Naive thymus-derived CD4-positive, alpha-beta T cell (primary cell): ENCODE measurements at regions of chr18 and their contacts with region 1.

Region 1: GRCh38 chr18:63074981-63075404 is 244.6 kb downstream of the BCL2 start:
- DNase-seq: peak; percentile 19 to 68 (median 42)
- ATAC-seq: peak; percentile 80
- H3K4me3 ChIP-seq: peak overlapping the region; percentile 66
- H3K4me3 Mint-ChIP-seq: peak overlapping the region; percentile 70 to 95 (median 86)
- H3K27ac ChIP-seq: no peak overlapping the region
- H3K27ac Mint-ChIP-seq: peak overlapping the region in 8 of 9 donors; percentile 0 to 85 (median 65)
- H3K4me1 ChIP-seq: no peaks in the 10 kb centered on the region
- H3K4me1 Mint-ChIP-seq: peaks cover 0 to 13% (median 12%) of the 10 kb centered on the region in 7 donors
- H3K27me3 ChIP-seq: no peaks in the 10 kb centered on the region
- H3K27me3 Mint-ChIP-seq: peaks cover 0 to 23% (median 10%) of the 10 kb centered on the region in 5 donors

Region 2: DNA sequence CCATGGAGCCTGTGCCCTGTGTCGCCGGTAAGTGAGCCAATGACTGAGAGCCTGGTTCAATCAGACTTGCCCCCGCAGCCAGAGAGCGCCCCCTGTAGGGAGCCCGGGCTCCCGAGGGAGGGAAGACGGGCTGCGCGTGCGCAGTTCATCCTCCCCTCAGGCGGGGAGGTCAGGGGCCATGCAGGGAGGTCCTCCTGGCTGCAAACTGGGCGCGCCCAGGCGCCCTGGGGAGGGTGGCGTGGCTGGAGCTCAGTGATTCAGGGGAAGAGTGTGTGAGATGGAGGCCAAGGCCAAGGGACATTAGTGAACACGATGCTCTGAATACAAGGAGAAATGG is 83.0 kb before region 1 on chr18:
- CTCF ChIA-PET with region 1: no interaction called
- POLR2A ChIA-PET with region 1: no interaction called
- intact Hi-C with region 1: no loop called
- DNase-seq: no peak
- ATAC-seq: no peak
- H3K4me3 ChIP-seq: no peak overlapping the region
- H3K4me3 Mint-ChIP-seq: no peak overlapping the region
- H3K27ac ChIP-seq: no peak overlapping the region
- H3K27ac Mint-ChIP-seq: no peak overlapping the region
- H3K4me1 ChIP-seq: no peaks in the 10 kb centered on the region
- H3K4me1 Mint-ChIP-seq: no peaks in the 10 kb centered on the region
- H3K27me3 ChIP-seq: no peaks in the 10 kb centered on the region
- H3K27me3 Mint-ChIP-seq: peaks cover 5 to 26% (median 7%) of the 10 kb centered on the region in 5 donors

Region 3: GRCh38 chr18:63098018-63098981 is 23.3 kb after region 1 on chr18:
- CTCF ChIA-PET with region 1: no interaction called
- POLR2A ChIA-PET with region 1: interaction called, 4 read pairs
- intact Hi-C with region 1: loop called (anchors 1 to 2 kb)
- DNase-seq: peak in 8 of 9 donors; percentile 41 to 69 (median 58)
- ATAC-seq: peak; percentile 67
- H3K4me3 ChIP-seq: peak overlapping the region; percentile 11
- H3K4me3 Mint-ChIP-seq: peak overlapping the region; percentile 34 to 82 (median 76)
- H3K27ac ChIP-seq: no peak overlapping the region
- H3K27ac Mint-ChIP-seq: peak overlapping the region; percentile 43 to 93 (median 85)
- H3K4me1 ChIP-seq: peaks cover 23 to 30% of the 10 kb centered on the region in 2 donors
- H3K4me1 Mint-ChIP-seq: peaks cover 46 to 69% (median 60%) of the 10 kb centered on the region in 7 donors
- H3K27me3 ChIP-seq: no peaks in the 10 kb centered on the region
- H3K27me3 Mint-ChIP-seq: peaks cover 0 to 41% (median 0%) of the 10 kb centered on the region in 5 donors

Region 4: DNA sequence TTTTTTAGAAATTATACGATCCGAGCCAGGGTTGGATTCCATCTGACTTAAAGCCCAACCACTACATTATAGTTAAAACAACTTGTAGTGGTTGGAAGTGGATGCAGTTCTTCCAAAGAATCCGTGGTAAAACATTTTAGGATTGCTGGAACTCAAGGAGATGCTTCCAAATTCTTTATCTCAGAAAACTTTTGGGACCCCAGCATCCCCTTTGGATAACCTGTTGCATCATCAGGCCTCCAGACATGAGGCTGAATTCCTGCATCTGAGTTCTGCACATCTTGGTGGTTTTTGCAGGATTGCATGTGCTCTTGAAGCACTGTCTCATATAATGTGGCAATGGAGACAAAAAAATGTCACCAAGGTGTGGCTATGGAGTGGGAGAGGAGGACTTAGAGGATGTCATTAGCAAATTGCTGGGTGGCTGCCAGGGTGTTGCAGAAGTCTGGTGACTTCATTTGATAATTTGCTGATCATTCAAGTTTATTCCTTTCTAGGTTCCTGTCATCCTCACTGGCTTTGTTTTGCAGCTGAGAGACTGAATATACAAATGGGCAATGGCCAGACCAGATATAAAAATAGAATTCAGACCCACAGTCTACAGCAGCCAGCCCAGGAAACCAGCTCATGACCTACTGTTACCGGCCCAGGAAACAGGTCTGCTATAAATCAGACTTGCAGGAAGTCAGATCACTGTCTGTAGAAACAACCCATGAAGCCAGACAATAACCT is 36.8 kb after region 1 on chr18:
- CTCF ChIA-PET with region 1: no interaction called
- POLR2A ChIA-PET with region 1: interaction called, 4 read pairs
- intact Hi-C with region 1: loop called in 1 of 2 experiments (anchors 5 kb)
- DNase-seq: no peak
- ATAC-seq: no peak
- H3K4me3 ChIP-seq: no peak overlapping the region
- H3K4me3 Mint-ChIP-seq: peak overlapping the region in 1 of 10 donors; percentile 26
- H3K27ac ChIP-seq: no peak overlapping the region
- H3K27ac Mint-ChIP-seq: no peak overlapping the region
- H3K4me1 ChIP-seq: peaks cover 0 to 7% of the 10 kb centered on the region in 2 donors
- H3K4me1 Mint-ChIP-seq: peaks cover 6 to 22% (median 14%) of the 10 kb centered on the region in 7 donors
- H3K27me3 ChIP-seq: no peaks in the 10 kb centered on the region
- H3K27me3 Mint-ChIP-seq: peaks cover 0 to 21% (median 5%) of the 10 kb centered on the region in 5 donors

Region 5: GRCh38 chr18:63119647-63120046 is 44.7 kb after region 1 on chr18:
- CTCF ChIA-PET with region 1: no interaction called
- POLR2A ChIA-PET with region 1: interaction called, 3 read pairs
- intact Hi-C with region 1: loop called (anchors 5 to 10 kb)
- DNase-seq: no peak
- ATAC-seq: no peak
- H3K4me3 ChIP-seq: no peak overlapping the region
- H3K4me3 Mint-ChIP-seq: no peak overlapping the region
- H3K27ac ChIP-seq: no peak overlapping the region
- H3K27ac Mint-ChIP-seq: peak overlapping the region in 2 of 9 donors; percentile 6 to 77
- H3K4me1 ChIP-seq: no peaks in the 10 kb centered on the region
- H3K4me1 Mint-ChIP-seq: peaks cover 4 to 21% (median 9%) of the 10 kb centered on the region in 7 donors
- H3K27me3 ChIP-seq: no peaks in the 10 kb centered on the region
- H3K27me3 Mint-ChIP-seq: peaks cover 0 to 36% (median 0%) of the 10 kb centered on the region in 5 donors